Activated CD4-positive, alpha-beta T cell treated with anti-CD3 and anti-CD28 coated beads, Interleukin-2, amount 10 ng/mL, durations not matched to agents 7 days and 5 days (primary cell): ENCODE measurements at regions of chr9 and their contacts with region 1.

Region 1: DNA sequence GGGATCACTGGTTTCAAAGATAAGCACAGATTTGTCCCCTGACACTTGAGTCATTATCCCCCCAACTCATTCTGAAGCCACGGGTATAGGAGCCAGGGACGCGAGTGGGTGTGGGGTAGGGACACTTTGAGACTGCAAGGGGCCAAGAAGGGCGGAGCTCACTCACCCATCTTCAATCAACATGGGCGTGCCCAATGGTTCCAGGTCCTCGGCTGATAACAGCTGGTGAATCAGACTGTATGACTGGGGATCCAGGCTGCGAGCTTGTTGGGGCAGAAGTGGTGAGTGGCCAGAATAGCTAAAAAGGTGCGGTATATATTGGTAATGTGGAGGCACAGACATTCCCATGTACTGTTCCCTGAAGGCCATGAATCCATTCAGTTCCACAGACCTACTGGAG is 30.7 kb upstream of the NR5A1 start:
- DNase-seq: no peak
- H3K4me3 Mint-ChIP-seq: no peak overlapping the region
- H3K27ac Mint-ChIP-seq: no peak overlapping the region
- H3K4me1 Mint-ChIP-seq: no peaks in the 10 kb centered on the region
- H3K27me3 Mint-ChIP-seq: peaks cover 7% of the 10 kb centered on the region

Region 2: DNA sequence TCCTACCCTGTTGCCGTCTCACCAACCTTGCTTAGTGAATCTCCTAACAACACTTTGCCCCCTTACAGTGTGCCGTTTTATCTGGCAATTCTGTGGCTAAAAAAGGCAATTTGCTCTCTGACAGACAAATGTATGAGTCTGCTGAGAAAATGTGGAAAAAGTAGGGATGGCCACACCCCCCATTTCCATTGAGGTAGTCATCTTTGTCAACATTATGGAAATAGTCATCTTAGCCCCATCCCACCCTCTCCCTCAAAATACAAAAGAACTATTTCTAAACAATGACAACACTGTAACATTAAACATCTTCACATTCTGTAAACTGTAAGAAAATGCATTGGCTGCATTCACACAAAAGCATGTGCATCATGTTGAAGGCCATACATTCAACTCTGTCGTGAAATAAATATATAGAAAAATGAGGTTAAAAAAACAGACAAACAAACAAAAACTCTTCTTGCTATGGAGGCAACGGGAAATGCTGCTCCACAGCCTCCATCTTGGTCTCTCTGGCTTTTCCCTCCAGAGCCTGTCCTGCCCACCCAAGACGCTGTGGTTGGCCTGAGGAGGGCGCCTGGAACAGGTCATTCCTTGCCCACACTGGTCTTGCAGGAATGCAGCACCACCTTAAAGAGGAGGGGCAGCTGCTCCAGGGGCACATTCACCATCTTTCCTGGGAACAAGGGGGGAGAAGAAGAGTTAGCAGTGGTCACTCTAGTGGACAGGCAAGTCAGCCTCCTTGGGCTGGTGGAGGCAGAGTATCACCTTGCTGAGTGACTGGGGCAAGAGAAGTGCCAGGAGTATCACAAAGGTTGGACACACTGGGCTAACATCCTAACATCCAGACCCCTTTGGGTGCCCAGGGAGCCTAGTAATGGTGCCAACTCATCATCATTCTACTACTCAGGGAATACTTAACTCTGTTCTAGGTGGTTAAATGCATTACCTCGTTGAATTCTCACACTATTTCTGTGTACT is 15.5 kb before region 1 on chr9:
- CTCF ChIA-PET with region 1: interaction called, 11 read pairs
- POLR2A ChIA-PET with region 1: no interaction called
- DNase-seq: no peak
- H3K4me3 Mint-ChIP-seq: no peak overlapping the region
- H3K27ac Mint-ChIP-seq: no peak overlapping the region
- H3K4me1 Mint-ChIP-seq: no peaks in the 10 kb centered on the region
- H3K27me3 Mint-ChIP-seq: peaks cover 3% of the 10 kb centered on the region

Region 3: DNA sequence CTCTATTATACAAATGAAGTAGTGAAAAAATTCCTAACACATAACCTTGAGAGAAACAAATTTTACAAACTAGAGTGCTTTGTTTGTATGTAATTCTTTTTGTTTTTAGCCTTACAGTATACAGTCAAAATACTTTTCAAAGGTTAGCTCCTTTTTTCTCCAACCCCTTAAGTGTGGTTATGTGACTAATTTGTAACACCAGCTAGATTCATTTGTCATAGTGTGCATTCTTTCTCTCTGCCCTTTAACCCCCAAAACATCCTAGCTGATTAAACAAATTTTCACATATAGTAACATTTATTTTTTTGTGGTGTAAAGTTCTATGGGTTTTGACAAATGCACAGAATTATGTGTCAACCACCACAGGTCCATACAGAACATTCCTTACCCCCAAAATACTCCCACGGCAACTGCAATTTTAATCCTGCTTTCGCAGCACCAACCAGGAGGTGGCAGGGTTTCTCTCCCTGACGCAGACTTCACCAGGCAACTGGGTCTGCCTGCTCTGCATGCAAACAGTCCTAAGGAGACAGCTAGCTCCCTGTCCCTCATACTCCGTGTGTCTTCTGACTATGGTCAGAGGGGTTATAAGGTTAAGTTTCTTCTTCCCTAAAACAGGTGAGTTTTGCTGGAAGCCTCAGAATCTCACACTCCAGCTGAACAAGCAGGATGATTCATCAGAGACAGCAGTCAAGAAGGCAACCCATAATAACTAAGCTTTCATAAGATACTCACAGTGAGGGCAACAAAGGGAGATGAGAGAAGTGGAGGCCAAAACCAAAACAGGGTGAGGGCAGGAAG is 13.7 kb after region 1 on chr9:
- CTCF ChIA-PET with region 1: interaction called, 29 read pairs
- POLR2A ChIA-PET with region 1: no interaction called
- DNase-seq: peak; percentile 48
- H3K4me3 Mint-ChIP-seq: no peak overlapping the region
- H3K27ac Mint-ChIP-seq: no peak overlapping the region
- H3K4me1 Mint-ChIP-seq: peaks cover 6% of the 10 kb centered on the region
- H3K27me3 Mint-ChIP-seq: peaks cover 8% of the 10 kb centered on the region